GM12878 (cell line): ENCODE measurements at regions of chr17 and their contacts with region 1.

Region 1: GRCh38 chr17:57243171-57243948 is 13.0 kb upstream of the MSI2 start:
- DNase-seq: peak; percentile 50
- ATAC-seq: peak; percentile 93
- H3K4me3 ChIP-seq: no peak overlapping the region
- H3K27ac ChIP-seq: no peak overlapping the region
- H3K4me1 ChIP-seq: no peaks in the 10 kb centered on the region
- H3K27me3 ChIP-seq: no peaks in the 10 kb centered on the region
- CTCF ChIP-seq: peak; percentile 100; a peak in 5 of 6 replicates
- EP300 ChIP-seq: no peak
- POLR2A ChIP-seq: no peak
- RAD21 ChIP-seq: peak; percentile 97

Region 2: DNA sequence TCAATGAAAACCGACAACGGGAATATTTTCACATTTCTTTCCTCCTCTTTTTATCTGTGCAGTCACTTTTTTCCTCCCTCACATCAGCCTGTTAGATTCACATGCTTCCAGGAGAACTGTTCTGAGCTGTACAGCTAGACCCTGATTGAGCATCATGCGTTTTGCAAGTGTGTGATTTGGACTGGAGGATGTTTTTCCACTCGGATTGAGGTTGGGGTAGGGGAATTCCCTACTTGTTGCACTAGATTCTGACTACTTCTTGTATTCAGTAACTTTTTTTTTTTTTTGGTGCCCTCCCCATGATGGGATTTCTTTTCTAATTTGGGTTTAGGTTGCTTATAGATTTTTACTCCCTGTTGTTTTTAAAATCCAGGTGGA is 17.7 kb after region 1 on chr17:
- CTCF ChIA-PET with region 1: interaction called, 61 read pairs
- POLR2A ChIA-PET with region 1: interaction called, 4 read pairs
- RAD21 ChIA-PET with region 1: interaction called, 24 read pairs
- SMC1A ChIA-PET with region 1: interaction called, 45 read pairs
- in situ Hi-C with region 1: no loop called
- intact Hi-C with region 1: no loop called
- DNase-seq: no peak
- ATAC-seq: no peak
- H3K4me3 ChIP-seq: peak overlapping the region; percentile 95; the same call in 1 of the 2 replicates
- H3K27ac ChIP-seq: peak overlapping the region; percentile 20
- H3K4me1 ChIP-seq: peaks cover 4% of the 10 kb centered on the region; the same call in 1 of the 2 replicates
- H3K27me3 ChIP-seq: no peaks in the 10 kb centered on the region
- CTCF ChIP-seq: no peak
- EP300 ChIP-seq: no peak
- POLR2A ChIP-seq: no peak
- RAD21 ChIP-seq: no peak

Region 3: DNA sequence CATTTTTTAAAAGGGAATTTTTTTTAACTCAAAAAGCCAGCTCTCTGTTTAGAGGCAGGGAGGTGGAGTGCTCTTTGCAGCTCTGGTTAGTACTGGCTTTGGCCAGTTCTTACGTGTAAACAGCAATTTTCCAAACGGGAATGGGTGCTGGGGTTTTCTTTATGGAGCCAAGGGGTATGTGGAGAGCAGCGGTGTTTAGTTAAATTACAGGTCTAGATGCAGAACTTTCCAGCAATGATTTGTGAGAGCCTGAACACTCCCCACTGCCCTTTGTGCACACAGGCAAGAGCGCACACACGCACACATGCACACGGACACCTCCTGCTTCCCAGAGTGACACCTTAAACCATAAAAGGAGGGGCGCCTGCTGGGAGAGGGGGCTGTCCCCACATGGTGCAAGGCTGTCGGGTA is 153.2 kb after region 1 on chr17:
- CTCF ChIA-PET with region 1: interaction called, 150 read pairs
- POLR2A ChIA-PET with region 1: no interaction called
- RAD21 ChIA-PET with region 1: interaction called, 71 read pairs
- SMC1A ChIA-PET with region 1: interaction called, 17 read pairs
- in situ Hi-C with region 1: no loop called
- intact Hi-C with region 1: no loop called
- DNase-seq: no peak
- ATAC-seq: no peak
- H3K4me3 ChIP-seq: no peak overlapping the region
- H3K27ac ChIP-seq: no peak overlapping the region
- H3K4me1 ChIP-seq: no peaks in the 10 kb centered on the region
- H3K27me3 ChIP-seq: no peaks in the 10 kb centered on the region
- CTCF ChIP-seq: no peak
- EP300 ChIP-seq: no peak
- POLR2A ChIP-seq: no peak
- RAD21 ChIP-seq: no peak

Region 4: GRCh38 chr17:57447990-57448758 is 204.8 kb after region 1 on chr17:
- CTCF ChIA-PET with region 1: interaction called, 19 read pairs
- POLR2A ChIA-PET with region 1: no interaction called
- RAD21 ChIA-PET with region 1: interaction called, 4 read pairs
- SMC1A ChIA-PET with region 1: interaction called, 23 read pairs
- in situ Hi-C with region 1: no loop called
- intact Hi-C with region 1: no loop called
- DNase-seq: no peak
- ATAC-seq: no peak
- H3K4me3 ChIP-seq: no peak overlapping the region
- H3K27ac ChIP-seq: peak overlapping the region; percentile 7
- H3K4me1 ChIP-seq: peaks cover 62% of the 10 kb centered on the region
- H3K27me3 ChIP-seq: no peaks in the 10 kb centered on the region
- CTCF ChIP-seq: no peak
- EP300 ChIP-seq: no peak
- POLR2A ChIP-seq: no peak
- RAD21 ChIP-seq: no peak

Region 5: GRCh38 chr17:57528058-57528451 is 284.7 kb after region 1 on chr17:
- CTCF ChIA-PET with region 1: interaction called, 10 read pairs
- POLR2A ChIA-PET with region 1: no interaction called
- RAD21 ChIA-PET with region 1: interaction called, 3 read pairs
- SMC1A ChIA-PET with region 1: interaction called, 7 read pairs
- in situ Hi-C with region 1: no loop called
- intact Hi-C with region 1: no loop called
- DNase-seq: no peak
- ATAC-seq: no peak
- H3K4me3 ChIP-seq: no peak overlapping the region
- H3K27ac ChIP-seq: no peak overlapping the region
- H3K4me1 ChIP-seq: peaks cover 48% of the 10 kb centered on the region
- H3K27me3 ChIP-seq: no peaks in the 10 kb centered on the region
- CTCF ChIP-seq: no peak
- EP300 ChIP-seq: no peak
- POLR2A ChIP-seq: no peak
- RAD21 ChIP-seq: no peak

Region 6: GRCh38 chr17:57747221-57748017 is 504.1 kb after region 1 on chr17:
- CTCF ChIA-PET with region 1: interaction called, 57 read pairs
- POLR2A ChIA-PET with region 1: no interaction called
- RAD21 ChIA-PET with region 1: interaction called, 37 read pairs
- SMC1A ChIA-PET with region 1: interaction called, 24 read pairs
- in situ Hi-C with region 1: loop called (anchors 5 kb)
- intact Hi-C with region 1: loop called (anchors 1 kb)
- DNase-seq: no peak
- ATAC-seq: peak; percentile 83
- H3K4me3 ChIP-seq: no peak overlapping the region
- H3K27ac ChIP-seq: no peak overlapping the region
- H3K4me1 ChIP-seq: peaks cover 12% of the 10 kb centered on the region
- H3K27me3 ChIP-seq: no peaks in the 10 kb centered on the region; a peak in 2 of 4 replicates
- CTCF ChIP-seq: peak; percentile 79 to 87 (median 84)
- EP300 ChIP-seq: no peak
- POLR2A ChIP-seq: no peak
- RAD21 ChIP-seq: peak; percentile 94